ENCODE measurements at regions of chr22 and their contacts with region 1.

Region 1: DNA sequence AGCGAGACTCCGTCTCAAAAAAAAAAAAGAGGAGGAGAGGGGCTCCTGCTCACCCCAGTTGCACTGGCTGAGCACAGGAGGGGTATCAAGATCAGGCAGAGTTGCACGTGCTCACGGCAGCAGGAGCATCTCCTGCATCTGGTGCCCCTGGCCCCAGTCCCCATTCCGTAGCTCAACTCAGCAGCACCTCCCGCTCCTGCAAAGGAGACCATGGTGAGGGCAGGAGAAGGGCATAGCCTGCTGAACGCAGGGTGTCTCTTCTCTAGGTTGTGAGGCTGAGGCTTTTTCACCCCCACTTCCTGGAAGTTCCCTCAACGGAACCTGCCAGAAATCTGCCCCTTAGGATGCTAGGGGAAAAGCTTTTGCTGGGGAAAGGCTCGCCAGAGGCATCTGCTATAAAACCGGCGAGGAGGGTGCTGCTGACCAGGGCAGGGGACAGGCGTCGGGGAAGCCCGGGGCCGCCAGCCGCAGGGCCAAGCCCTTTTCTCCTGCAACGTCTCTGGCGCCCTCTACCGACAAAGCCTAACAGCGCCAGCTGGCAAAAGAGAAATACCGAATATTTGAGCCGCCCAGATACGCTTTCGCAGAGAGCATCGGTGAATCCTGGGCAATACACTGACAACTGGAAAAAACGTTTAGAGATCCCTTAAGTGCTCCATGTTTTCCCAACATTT is 1.0 kb upstream of the PPP6R2 start:
- DNase-seq: peak; percentile 83 to 89 (median 86)
- H3K4me3 ChIP-seq: peak overlapping the region; percentile 39 to 70
- H3K4me3 Mint-ChIP-seq: peak overlapping the region; percentile 80 to 93 (median 88)
- H3K27ac ChIP-seq: peak overlapping the region; percentile 84
- H3K27ac Mint-ChIP-seq: peak overlapping the region; percentile 92 to 97 (median 95)
- H3K4me1 ChIP-seq: peaks cover 28% of the 10 kb centered on the region
- H3K4me1 Mint-ChIP-seq: peaks cover 3 to 12% (median 5%) of the 10 kb centered on the region in 4 donors
- H3K27me3 ChIP-seq: no peaks in the 10 kb centered on the region
- H3K27me3 Mint-ChIP-seq: no peaks in the 10 kb centered on the region

Region 2: GRCh38 chr22:50225200-50225969 is 116.7 kb before region 1 on chr22:
- CTCF ChIA-PET with region 1: no interaction called
- POLR2A ChIA-PET with region 1: no interaction called
- intact Hi-C with region 1: no loop called
- DNase-seq: no peak
- H3K4me3 ChIP-seq: no peak overlapping the region
- H3K4me3 Mint-ChIP-seq: no peak overlapping the region
- H3K27ac ChIP-seq: no peak overlapping the region
- H3K27ac Mint-ChIP-seq: no peak overlapping the region
- H3K4me1 ChIP-seq: no peaks in the 10 kb centered on the region
- H3K4me1 Mint-ChIP-seq: peaks cover 0 to 6% (median 1%) of the 10 kb centered on the region in 4 donors
- H3K27me3 ChIP-seq: no peaks in the 10 kb centered on the region
- H3K27me3 Mint-ChIP-seq: no peaks in the 10 kb centered on the region

Region 3: DNA sequence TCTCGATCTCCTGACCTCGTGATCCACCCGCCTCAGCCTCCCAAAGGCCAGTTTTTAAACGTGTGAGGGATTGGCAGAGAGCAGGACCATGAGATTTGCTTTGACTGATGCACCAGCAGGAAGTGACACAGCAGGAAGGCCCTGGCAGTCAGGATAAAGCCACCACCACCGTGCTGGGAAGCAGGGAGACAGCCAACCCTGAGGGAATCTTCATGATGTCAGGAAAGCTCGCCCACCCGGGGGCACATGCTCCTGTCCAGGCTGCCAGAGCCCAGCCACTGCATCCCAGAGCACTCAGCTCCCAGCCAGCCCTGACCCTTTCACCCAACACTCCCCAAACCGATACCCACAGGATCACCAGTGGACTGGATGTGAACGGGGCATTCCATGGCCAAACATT is 103.4 kb before region 1 on chr22:
- CTCF ChIA-PET with region 1: interaction called, 14 read pairs
- POLR2A ChIA-PET with region 1: interaction called, 12 read pairs
- intact Hi-C with region 1: loop called (anchors 1 kb)
- DNase-seq: no peak
- H3K4me3 ChIP-seq: no peak overlapping the region
- H3K4me3 Mint-ChIP-seq: no peak overlapping the region
- H3K27ac ChIP-seq: no peak overlapping the region
- H3K27ac Mint-ChIP-seq: peak overlapping the region in 1 of 7 donors; percentile 53
- H3K4me1 ChIP-seq: peaks cover 27% of the 10 kb centered on the region
- H3K4me1 Mint-ChIP-seq: peaks cover 32 to 66% (median 40%) of the 10 kb centered on the region in 4 donors
- H3K27me3 ChIP-seq: no peaks in the 10 kb centered on the region
- H3K27me3 Mint-ChIP-seq: no peaks in the 10 kb centered on the region

Region 4: DNA sequence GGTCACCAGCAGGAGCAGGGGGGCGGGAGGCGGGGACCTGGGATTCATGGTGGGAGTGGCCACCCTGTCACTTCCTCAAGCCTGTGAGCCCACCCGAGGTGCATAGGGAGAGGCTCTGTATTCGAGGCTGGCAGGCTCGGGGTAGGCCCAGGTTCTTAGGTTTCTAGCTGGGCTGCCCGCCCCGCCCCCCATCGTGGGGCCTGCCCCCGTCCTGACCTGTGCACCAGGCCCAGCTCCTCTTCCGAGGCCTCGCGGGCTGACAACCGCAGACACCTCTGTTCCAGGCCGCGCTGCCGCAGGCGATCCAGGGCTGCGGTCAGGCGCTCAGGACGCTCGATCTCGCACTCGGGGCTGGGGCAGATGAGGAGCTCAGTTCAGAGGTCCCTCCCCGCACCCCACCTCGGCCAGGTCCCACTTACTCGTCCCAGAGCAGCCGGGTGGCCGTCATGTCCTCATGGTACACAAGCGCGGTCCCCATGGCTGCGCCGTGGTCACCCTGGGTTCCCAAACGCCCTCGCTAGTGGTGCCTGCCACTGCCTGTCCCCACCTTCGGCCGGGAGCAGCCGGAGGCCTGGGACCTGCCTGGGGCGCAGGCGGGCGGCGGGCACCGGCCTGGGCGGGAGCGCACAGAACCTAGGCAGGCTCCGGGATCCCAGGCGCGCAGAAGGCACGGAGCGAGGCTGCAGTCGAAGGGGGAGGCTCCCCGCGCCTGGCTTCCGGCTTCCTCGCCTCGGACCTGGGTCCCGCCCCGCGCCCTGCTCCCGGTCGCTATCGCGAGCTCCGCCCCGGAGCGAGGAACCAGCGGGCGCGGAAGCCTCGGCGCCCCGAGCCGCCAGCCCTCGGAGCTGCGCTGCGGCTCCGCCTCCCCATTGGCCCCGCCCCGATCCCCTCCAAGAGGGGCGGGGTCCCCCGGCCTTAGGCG is 91.3 kb before region 1 on chr22 and contains the start of gene HDAC10:
- CTCF ChIA-PET with region 1: interaction called, 24 read pairs
- POLR2A ChIA-PET with region 1: interaction called, 16 read pairs
- intact Hi-C with region 1: loop called (anchors 1 kb)
- DNase-seq: peak; percentile 71 to 78 (median 74)
- H3K4me3 ChIP-seq: peak within 1 kb of the TSS; percentile 36 to 89
- H3K4me3 Mint-ChIP-seq: peak within 1 kb of the TSS; percentile 73 to 84 (median 78)
- H3K27ac ChIP-seq: peak within 1 kb of the TSS; percentile 66
- H3K27ac Mint-ChIP-seq: peak within 1 kb of the TSS in 6 of 7 donors; percentile 50 to 88 (median 64)
- H3K4me1 ChIP-seq: peaks cover 44% of the 10 kb centered on the region
- H3K4me1 Mint-ChIP-seq: peaks cover 7 to 29% (median 17%) of the 10 kb centered on the region in 4 donors
- H3K27me3 ChIP-seq: no peaks in the 10 kb centered on the region
- H3K27me3 Mint-ChIP-seq: peaks cover 1 to 2% of the 10 kb centered on the region in 2 donors
- total RNA-seq, gene HDAC10: 141 to 151 TPM

Region 5: GRCh38 chr22:50314455-50315288 is 27.4 kb before region 1 on chr22:
- CTCF ChIA-PET with region 1: interaction called, 8 read pairs
- POLR2A ChIA-PET with region 1: no interaction called
- intact Hi-C with region 1: loop called (anchors 1 kb)
- DNase-seq: peak; percentile 54 to 72 (median 60)
- H3K4me3 ChIP-seq: peak overlapping the region; percentile 28 to 36
- H3K4me3 Mint-ChIP-seq: peak overlapping the region; percentile 81 to 96 (median 87)
- H3K27ac ChIP-seq: peak overlapping the region; percentile 30
- H3K27ac Mint-ChIP-seq: peak overlapping the region; percentile 40 to 97 (median 91)
- H3K4me1 ChIP-seq: peaks cover 19% of the 10 kb centered on the region
- H3K4me1 Mint-ChIP-seq: peaks cover 6 to 18% (median 12%) of the 10 kb centered on the region in 4 donors
- H3K27me3 ChIP-seq: no peaks in the 10 kb centered on the region
- H3K27me3 Mint-ChIP-seq: no peaks in the 10 kb centered on the region

Region 6: DNA sequence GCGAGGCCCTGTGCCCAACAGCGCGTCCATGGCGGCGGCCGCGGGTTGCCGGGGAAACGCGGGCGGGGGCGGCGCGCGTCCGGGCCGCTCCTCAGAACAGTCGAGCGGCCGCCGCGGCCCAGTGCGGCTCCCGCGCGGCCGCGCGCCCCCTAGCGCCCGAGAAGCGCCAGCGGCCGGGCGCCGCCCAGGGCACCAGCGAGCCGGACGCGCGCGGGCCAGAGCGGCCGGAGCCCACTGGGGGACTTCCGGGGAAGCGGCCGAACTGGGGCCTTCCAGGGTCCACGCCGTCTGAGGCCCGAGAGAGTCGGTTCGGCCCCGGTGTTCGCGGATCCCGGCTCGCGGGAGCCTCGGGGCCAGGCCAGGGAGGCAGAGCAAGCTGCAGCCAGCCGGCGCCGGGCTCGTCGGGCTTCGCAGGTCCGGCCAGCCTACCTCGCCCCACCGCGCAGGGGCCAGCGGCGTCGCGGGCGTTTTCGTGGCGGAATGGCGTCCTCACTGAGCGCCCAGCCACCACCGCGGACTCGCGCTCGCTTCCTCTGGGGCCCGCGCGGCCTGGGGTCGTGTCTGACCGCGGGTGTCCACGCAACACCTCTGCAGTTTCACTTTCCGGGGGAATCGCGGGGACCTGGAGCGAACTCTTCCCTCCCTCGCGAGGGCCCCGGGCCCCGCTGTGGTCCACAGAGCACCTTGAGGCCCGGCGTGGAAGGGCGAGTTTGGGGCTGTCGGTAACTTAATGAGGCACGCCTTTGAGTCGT is 15.0 kb before region 1 on chr22 and contains the start of gene DENND6B:
- CTCF ChIA-PET with region 1: interaction called, 21 read pairs
- POLR2A ChIA-PET with region 1: interaction called, 12 read pairs
- intact Hi-C with region 1: loop called (anchors 1 kb)
- DNase-seq: peak; percentile 51 to 73 (median 60)
- H3K4me3 ChIP-seq: peak within 1 kb of the TSS; percentile 2 to 55
- H3K4me3 Mint-ChIP-seq: peak within 1 kb of the TSS; percentile 77 to 87 (median 86)
- H3K27ac ChIP-seq: peak within 1 kb of the TSS; percentile 51
- H3K27ac Mint-ChIP-seq: peak within 1 kb of the TSS; percentile 41 to 82 (median 66)
- H3K4me1 ChIP-seq: peaks cover 9% of the 10 kb centered on the region
- H3K4me1 Mint-ChIP-seq: peaks cover 5 to 14% (median 9%) of the 10 kb centered on the region in 4 donors
- H3K27me3 ChIP-seq: no peaks in the 10 kb centered on the region
- H3K27me3 Mint-ChIP-seq: peaks cover 0 to 4% of the 10 kb centered on the region in 2 donors
- total RNA-seq, gene DENND6B: 1.5 to 2.4 TPM

Region 7: GRCh38 chr22:50498322-50498890 is 156.3 kb after region 1 on chr22:
- CTCF ChIA-PET with region 1: interaction called, 9 read pairs
- POLR2A ChIA-PET with region 1: no interaction called
- intact Hi-C with region 1: loop called (anchors 1 kb)
- DNase-seq: peak; percentile 66 to 69 (median 68)
- H3K4me3 ChIP-seq: no peak overlapping the region
- H3K4me3 Mint-ChIP-seq: no peak overlapping the region
- H3K27ac ChIP-seq: no peak overlapping the region
- H3K27ac Mint-ChIP-seq: peak overlapping the region in 1 of 7 donors; percentile 30
- H3K4me1 ChIP-seq: peaks cover 3% of the 10 kb centered on the region
- H3K4me1 Mint-ChIP-seq: peaks cover 0 to 5% (median under 1%) of the 10 kb centered on the region in 4 donors
- H3K27me3 ChIP-seq: no peaks in the 10 kb centered on the region
- H3K27me3 Mint-ChIP-seq: no peaks in the 10 kb centered on the region

Region 8: GRCh38 chr22:50582562-50583293 is 240.6 kb after region 1 on chr22 and contains the start of gene CHKB:
- CTCF ChIA-PET with region 1: no interaction called
- POLR2A ChIA-PET with region 1: interaction called, 3 read pairs
- intact Hi-C with region 1: loop called (anchors 2 kb)
- DNase-seq: peak; percentile 98 to 99 (median 98)
- H3K4me3 ChIP-seq: peak within 1 kb of the TSS; percentile 63 to 91
- H3K4me3 Mint-ChIP-seq: peak within 1 kb of the TSS; percentile 90 to 96 (median 93)
- H3K27ac ChIP-seq: peak within 1 kb of the TSS; percentile 97
- H3K27ac Mint-ChIP-seq: peak within 1 kb of the TSS; percentile 91 to 98 (median 96)
- H3K4me1 ChIP-seq: peaks cover 21% of the 10 kb centered on the region
- H3K4me1 Mint-ChIP-seq: peaks cover 8 to 39% (median 16%) of the 10 kb centered on the region in 4 donors
- H3K27me3 ChIP-seq: no peaks in the 10 kb centered on the region
- H3K27me3 Mint-ChIP-seq: no peaks in the 10 kb centered on the region
- total RNA-seq, gene CHKB: 178 to 196 TPM